Right ventricle myocardium inferior (tissue), 1 donor: ENCODE measurements at regions of chr2 and their contacts with region 1.

Region 1: DNA sequence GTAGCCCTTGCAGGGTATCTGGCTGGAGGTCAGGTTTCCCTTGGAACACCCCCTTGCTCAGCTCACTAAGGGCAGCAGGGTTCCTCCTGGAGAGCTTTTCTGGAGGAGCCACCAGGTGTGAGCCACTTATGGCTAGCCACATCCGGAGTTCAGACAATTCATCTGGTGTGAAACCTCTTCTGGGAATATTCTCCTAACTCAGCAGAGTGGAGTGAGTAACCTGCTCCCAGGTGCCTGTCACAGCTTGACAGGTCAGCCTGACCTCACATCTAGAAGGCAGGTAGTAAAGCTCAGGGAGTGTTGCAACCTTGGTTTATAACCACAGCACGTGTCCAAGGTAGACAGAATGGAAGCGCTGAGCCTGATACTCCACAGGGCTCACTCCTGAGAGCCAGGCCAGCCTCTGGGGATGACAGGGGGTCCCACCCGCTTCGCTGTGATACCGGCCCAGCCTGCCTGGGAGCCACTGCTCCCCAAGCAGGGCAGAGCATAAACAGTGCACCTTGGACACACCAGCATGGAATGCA is 62.6 kb upstream of the TGFA start:
- DNase-seq: no peak
- ATAC-seq: no peak

Region 2: GRCh38 chr2:70553584-70554337 is 62.5 kb before region 1 on chr2 and contains the start of gene TGFA:
- intact Hi-C with region 1: loop called (anchors 2 kb)
- DNase-seq: peak; percentile 91
- ATAC-seq: peak; percentile 89
- total RNA-seq, gene TGFA: 1.0 TPM